ENCODE measurements at regions of chr1 and their contacts with region 1.

Region 1: DNA sequence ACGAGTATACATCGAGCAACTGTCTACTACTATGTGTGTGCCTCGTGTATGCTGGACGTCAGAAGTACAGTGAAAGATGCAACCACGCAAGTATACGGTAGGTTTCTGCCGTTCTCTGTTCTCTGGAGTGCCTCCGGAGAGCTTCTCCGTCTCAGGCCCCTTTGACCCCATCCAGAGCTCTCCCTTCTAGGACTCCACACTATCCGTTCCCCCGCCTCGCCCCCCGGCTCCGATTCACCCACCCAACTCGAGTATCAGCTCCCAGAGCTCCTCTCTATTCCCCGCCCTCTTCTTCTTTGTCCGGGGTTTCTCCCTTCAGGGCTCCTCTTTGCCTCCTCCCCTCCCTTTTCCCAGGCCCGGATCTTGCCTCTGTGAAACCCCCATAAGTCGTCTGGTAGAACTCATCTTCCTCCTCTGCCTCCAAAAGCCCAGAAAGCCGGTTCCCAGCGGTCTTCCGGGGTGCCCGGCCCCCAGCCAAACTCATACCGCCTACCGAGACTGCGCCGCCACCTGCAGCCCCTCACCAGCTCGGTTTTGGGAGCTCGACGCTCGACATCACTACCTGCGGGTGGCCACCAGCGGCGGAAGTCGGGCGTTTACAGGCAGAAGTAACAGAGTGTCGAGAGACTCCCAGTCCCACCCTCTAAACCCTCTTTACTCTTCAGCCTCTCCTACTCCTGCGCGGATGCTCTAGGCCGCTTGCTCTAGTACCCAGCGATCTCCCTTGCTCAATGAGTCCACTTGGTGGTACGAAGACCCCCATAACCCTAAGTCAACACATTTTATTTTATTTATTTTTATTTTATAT is at the start of gene VPS72:
- DNase-seq: peak; percentile 69 to 80 (median 76)
- H3K4me3 ChIP-seq: peak within 1 kb of the TSS; percentile 80 to 98 (median 93)
- H3K4me3 Mint-ChIP-seq: peak within 1 kb of the TSS; percentile 100
- H3K27ac ChIP-seq: peak within 1 kb of the TSS; percentile 75 to 83
- H3K27ac Mint-ChIP-seq: peak within 1 kb of the TSS; percentile 95 to 99 (median 96)
- H3K4me1 ChIP-seq: peaks cover 18 to 23% of the 10 kb centered on the region in 2 donors
- H3K4me1 Mint-ChIP-seq: peaks cover 27% of the 10 kb centered on the region
- H3K27me3 ChIP-seq: no peaks in the 10 kb centered on the region
- H3K27me3 Mint-ChIP-seq: peaks cover 5 to 14% (median 11%) of the 10 kb centered on the region in 3 donors
- CTCF ChIP-seq: no peak
- polyA plus RNA-seq, gene VPS72: 30.4 to 43.3 (median 37.7) TPM

Region 2: DNA sequence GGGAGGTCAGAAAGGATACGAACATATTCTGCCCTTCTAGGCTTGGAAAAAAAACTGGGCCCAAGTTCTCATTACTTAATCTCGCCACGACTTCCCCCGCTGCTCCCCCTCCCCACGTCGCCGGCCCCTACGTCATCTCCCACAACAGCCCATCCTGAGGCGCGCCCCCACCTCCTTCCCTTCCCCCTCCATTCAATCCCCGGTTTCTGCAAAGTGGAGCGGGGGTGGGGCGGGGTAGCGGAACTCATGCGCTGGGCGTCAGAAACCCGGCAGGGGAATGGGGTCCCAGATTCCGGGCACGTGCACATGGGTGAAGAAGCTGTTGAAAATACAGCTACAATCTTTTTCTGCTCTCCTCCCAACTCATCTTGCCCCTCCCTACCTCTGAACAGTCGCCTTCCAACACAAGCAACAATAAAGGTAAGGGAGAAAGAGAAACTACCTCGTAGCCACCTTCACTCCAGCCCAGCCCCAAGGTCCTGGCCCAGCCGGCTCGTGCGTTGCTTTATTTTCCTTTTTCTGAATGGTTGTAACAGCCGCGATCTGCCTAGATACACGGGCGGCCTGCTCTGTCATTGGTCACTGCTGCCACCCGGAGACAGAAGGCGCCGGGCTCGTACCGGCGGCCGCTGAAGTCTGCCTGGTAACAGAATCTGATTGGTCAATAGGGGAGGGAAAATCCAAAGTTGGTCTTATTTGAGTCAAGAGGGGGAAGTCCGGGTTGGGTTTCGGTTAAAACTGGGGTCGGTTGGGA is 157.1 kb after region 1 on chr1 and contains the start of gene RFX5:
- intact Hi-C with region 1: loop called in 1 of 2 experiments (anchors 5 kb)
- DNase-seq: peak; percentile 98 to 99 (median 98)
- H3K4me3 ChIP-seq: peak within 1 kb of the TSS; percentile 76 to 89 (median 80)
- H3K4me3 Mint-ChIP-seq: peak within 1 kb of the TSS; percentile 93 to 94
- H3K27ac ChIP-seq: peak within 1 kb of the TSS; percentile 98
- H3K27ac Mint-ChIP-seq: peak within 1 kb of the TSS; percentile 99 to 100 (median 100)
- H3K4me1 ChIP-seq: peaks cover 17 to 22% of the 10 kb centered on the region in 2 donors
- H3K4me1 Mint-ChIP-seq: peaks cover 25% of the 10 kb centered on the region
- H3K27me3 ChIP-seq: no peaks in the 10 kb centered on the region
- H3K27me3 Mint-ChIP-seq: peaks cover 0 to 2% (median 0%) of the 10 kb centered on the region in 3 donors
- CTCF ChIP-seq: no peak
- polyA plus RNA-seq, gene RFX5: 39.3 to 66.3 (median 43.5) TPM